ENCODE measurements at regions of chr2 and their contacts with region 1.

Region 1: DNA sequence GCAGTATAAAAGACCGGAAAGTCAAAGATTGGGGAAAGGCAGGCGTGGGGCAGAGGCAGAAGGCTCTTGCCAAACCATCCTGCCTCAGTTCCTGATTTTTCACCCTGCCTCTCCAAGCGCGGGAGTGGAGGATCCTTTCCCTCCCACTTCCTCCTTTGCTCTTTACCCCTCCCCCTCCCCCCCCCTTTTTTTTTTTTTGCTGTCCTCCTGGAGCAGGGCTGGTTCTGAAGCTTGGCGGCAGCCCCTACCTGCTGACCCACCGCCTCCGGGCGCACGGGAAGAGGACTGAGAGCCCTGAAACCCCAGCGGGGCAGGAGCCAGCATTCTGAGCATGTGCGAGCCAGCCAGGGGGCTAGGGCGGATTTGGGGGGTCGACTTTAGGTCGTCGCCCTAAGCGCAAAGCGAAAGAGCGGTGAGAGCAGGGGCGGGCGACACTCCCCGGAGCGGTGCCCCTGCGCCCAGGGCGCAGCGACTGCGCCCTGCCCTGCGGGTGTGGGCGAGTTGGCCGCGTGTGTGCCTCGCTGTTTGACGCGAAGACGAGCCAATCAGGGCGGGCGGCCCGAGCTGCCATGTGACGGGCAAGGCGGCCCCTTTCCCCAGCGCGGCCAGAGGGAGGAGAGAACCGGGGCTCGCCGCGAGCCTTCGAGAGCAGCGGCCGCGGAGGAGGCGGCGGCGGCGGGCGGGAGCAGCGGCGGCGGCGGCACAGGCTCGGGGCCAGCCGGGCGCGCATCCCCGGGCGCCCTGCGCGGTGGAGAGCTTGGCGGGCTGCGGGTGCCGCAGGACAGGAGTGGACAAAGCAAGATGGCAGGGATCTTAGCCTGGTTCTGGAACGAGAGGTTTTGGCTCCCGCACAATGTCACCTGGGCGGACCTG is at the start of gene CERS6:
- DNase-seq: peak; percentile 93 to 94
- ATAC-seq: peak; percentile 92 to 93
- H3K4me3 ChIP-seq: peak within 1 kb of the TSS; percentile 78 to 95 (median 93)
- H3K27ac ChIP-seq: peak within 1 kb of the TSS; percentile 84 to 89 (median 87)
- H3K4me1 ChIP-seq: peaks cover 15 to 16% of the 10 kb centered on the region in 2 donors
- H3K27me3 ChIP-seq: no peaks in the 10 kb centered on the region
- CTCF ChIP-seq: peak in 1 of 5 experiments; percentile 17
- POLR2A ChIP-seq: peak; percentile 86 to 89
- total RNA-seq, gene CERS6: 11.9 to 18.0 (median 14.7) TPM

Region 2: GRCh38 chr2:168518555-168519066 is 62.7 kb after region 1 on chr2:
- in situ Hi-C with region 1: no loop called
- intact Hi-C with region 1: loop called (anchors 5 kb)
- DNase-seq: no peak
- ATAC-seq: peak; percentile 37 to 63
- H3K4me3 ChIP-seq: no peak overlapping the region
- H3K27ac ChIP-seq: peak overlapping the region; percentile 35 to 53 (median 46)
- H3K4me1 ChIP-seq: peaks cover 40 to 61% of the 10 kb centered on the region in 2 donors
- H3K27me3 ChIP-seq: no peaks in the 10 kb centered on the region
- CTCF ChIP-seq: no peak
- POLR2A ChIP-seq: no peak

Region 3: DNA sequence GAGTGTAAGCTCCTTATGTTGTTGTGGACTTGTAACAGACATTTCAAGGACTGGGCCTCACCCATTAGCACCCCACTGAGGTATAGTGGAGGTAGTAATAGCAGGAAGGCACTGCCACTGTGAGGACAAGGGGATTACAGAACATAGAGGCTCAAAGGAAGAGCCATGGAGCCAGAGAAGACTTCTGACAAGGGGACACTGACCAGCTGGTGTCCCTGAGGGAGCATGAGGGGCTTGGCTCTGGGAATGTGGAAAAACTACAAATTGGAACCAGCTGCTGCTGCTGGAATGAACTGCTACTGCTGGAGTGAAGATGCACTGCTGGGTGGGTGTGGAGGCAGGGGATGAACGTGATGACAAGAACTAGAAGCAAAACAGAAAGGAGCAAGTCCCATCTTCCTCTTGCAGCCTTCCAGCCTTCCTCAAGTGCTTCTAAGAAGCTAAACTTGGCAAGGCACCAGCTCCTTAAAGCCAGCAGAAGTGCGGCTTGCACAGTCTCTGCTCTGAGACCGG is 179.2 kb after region 1 on chr2:
- in situ Hi-C with region 1: no loop called
- intact Hi-C with region 1: loop called (anchors 5 kb)
- DNase-seq: peak; percentile 37 to 42
- ATAC-seq: peak; percentile 11 to 21
- H3K4me3 ChIP-seq: no peak overlapping the region
- H3K27ac ChIP-seq: peak overlapping the region in 2 of 4 donors; percentile 31 to 79
- H3K4me1 ChIP-seq: peaks cover 35 to 55% of the 10 kb centered on the region in 2 donors
- H3K27me3 ChIP-seq: no peaks in the 10 kb centered on the region
- CTCF ChIP-seq: no peak
- POLR2A ChIP-seq: no peak

Region 4: DNA sequence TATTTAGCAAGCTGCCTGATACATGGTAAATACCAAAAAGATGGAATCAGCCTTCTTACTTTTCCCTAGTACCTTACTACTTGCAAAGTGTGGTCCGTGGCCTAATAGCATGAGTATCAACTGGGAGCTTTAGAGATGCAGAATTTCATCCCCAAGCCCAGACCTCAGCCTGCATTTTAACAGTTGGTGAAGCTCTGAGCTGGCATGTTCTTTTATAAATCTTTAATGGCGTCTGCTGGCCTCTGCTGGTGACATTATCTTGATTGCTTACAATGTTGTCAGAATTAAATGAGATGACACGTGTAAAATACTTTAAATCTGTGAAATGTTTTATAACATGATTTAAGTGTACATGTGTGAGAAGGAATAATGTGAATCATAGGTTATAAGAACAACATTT is 231.4 kb after region 1 on chr2:
- in situ Hi-C with region 1: no loop called
- intact Hi-C with region 1: loop called (anchors 5 kb)
- DNase-seq: no peak
- ATAC-seq: peak in 1 of 2 donors; percentile 54
- H3K4me3 ChIP-seq: no peak overlapping the region
- H3K27ac ChIP-seq: no peak overlapping the region
- H3K4me1 ChIP-seq: peaks cover 0 to 2% of the 10 kb centered on the region in 2 donors
- H3K27me3 ChIP-seq: no peaks in the 10 kb centered on the region
- CTCF ChIP-seq: peak; percentile 26 to 49 (median 40)
- POLR2A ChIP-seq: no peak

Region 5: DNA sequence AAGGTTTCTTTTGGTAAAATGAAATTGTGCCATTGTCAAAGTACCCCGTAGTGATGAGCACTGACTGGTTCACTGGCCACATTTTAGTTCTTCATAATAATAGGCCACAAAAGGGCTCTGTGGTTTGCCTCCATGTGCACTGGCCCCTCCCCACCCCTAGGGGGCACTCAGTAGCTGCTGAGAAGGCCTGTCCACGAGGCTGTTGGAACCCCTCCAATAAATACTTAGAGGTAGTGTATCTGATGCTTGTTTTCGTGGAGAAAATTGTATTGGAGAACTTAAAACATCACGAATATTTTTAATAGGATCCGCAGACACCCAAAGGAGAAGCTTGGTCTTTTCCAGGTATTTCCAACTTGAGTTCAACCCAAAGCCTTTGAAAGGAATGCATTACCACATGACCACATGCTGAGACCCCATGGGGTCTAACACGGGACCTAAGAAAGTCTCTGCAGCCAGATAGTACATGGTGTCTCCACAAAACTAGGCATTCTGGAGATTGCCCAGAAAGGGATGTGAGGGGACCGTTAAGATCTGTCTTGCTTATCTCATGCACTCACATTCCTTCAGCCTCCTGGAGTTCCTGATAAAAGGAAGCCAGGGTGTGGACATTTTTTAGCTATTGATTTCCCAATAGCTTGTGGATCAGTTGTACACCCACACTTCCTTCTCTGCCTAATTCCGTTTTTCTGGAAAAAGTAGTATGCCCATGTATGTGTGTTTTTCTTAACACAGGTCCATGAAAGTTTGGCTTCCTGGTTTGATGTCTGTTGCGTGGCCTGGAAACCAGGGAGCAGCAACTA is 318.0 kb after region 1 on chr2:
- in situ Hi-C with region 1: no loop called
- intact Hi-C with region 1: no loop called
- DNase-seq: peak; percentile 16 to 55
- ATAC-seq: peak; percentile 54 to 81
- H3K4me3 ChIP-seq: no peak overlapping the region
- H3K27ac ChIP-seq: no peak overlapping the region
- H3K4me1 ChIP-seq: no peaks in the 10 kb centered on the region
- H3K27me3 ChIP-seq: no peaks in the 10 kb centered on the region
- CTCF ChIP-seq: peak; percentile 79 to 89 (median 85)
- POLR2A ChIP-seq: no peak

Region 6: DNA sequence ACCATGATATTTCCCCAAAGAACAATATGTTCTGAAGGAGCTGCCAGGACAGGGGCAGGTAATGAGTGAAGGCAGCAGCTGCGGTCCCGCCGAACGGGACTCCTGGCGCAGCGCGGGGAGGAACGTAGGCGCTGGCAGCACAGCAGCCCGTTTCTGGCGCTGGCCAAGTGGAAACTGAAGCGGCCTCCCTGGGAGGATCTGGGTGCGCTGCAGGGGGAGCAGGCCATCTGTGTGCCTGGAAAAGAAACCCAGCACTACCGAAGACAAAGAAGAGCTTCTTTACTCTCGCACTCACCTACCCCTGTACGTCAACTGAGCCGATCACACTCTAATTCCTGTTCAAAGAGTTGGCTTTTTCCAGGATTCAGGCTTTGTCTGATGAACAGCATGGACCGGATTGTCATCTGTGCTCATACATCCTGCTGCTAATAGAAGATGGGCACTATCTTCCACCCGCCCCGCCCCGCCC is 457.1 kb after region 1 on chr2:
- in situ Hi-C with region 1: no loop called
- intact Hi-C with region 1: loop called (anchors 10 kb)
- DNase-seq: peak; percentile 68 to 88
- ATAC-seq: peak; percentile 85 to 94
- H3K4me3 ChIP-seq: peak overlapping the region; percentile 35 to 40 (median 40)
- H3K27ac ChIP-seq: peak overlapping the region; percentile 27 to 74 (median 62)
- H3K4me1 ChIP-seq: peaks cover 0 to 12% of the 10 kb centered on the region in 2 donors
- H3K27me3 ChIP-seq: no peaks in the 10 kb centered on the region
- CTCF ChIP-seq: no peak
- POLR2A ChIP-seq: no peak